Activated B cell treated with CpG ODN at 0.5 μM for 24 hours (primary cell): ENCODE measurements at regions of chr4 and their contacts with region 1.

Region 1: DNA sequence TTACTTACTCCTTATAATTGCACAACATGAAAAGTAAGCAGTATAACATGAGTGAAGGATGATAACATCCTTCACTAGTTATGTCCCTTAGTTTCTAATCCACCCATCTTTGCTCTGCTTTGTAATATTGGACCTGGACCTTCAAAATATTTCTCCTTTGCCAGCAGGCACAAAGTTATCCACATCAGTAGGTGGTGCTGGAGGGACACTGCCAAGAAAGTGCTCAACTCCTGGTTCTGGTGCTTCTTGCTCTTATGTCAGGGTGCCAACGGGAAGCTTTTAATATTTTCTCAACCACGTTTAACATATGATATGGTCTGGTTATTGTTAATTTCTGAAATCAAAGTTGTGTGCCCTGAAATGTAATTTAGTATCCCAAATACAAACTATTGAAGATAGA is 49.1 kb downstream of the TMEM165 start:
- DNase-seq: no peak
- ATAC-seq: no peak
- H3K4me3 Mint-ChIP-seq: no peak overlapping the region
- H3K27ac Mint-ChIP-seq: no peak overlapping the region
- H3K4me1 Mint-ChIP-seq: no peaks in the 10 kb centered on the region
- H3K27me3 Mint-ChIP-seq: no peaks in the 10 kb centered on the region
- CTCF ChIP-seq: no peak

Region 2: DNA sequence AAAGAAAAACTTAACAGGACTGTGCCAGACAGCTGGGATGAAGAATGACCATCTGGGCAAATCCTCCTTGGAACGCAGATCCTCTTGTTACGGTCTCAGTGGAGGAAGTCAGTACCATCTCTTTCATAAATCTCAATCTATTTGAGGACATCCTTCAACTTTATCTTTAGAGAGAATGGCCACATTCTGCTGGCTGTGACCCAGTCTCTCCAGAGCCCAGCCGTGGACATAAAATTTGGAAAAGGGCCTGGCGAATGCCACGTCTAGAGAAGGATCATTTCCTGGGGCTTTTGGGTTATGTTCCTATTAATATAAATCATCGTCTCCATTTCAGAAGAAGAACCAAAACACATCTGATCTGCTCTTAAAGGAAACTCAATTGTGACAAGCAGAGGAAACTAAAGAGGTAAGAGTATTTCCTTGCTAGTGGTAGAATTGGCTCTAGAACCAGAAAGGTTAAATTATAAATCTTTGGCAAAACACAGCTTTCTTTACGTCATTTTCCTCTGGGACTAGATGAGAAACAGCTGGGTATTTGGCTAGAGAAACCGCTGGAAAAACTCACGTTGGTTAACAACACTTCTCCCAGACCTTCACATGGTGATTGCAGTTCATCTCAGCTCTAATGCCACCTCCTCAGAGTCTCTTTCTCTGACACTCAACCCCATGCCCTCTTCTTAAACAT is 1545.1 kb before region 1 on chr4:
- CTCF ChIA-PET with region 1: no interaction called
- POLR2A ChIA-PET with region 1: no interaction called
- intact Hi-C with region 1: no loop called
- DNase-seq: no peak
- ATAC-seq: no peak
- H3K4me3 Mint-ChIP-seq: no peak overlapping the region
- H3K27ac Mint-ChIP-seq: no peak overlapping the region
- H3K4me1 Mint-ChIP-seq: no peaks in the 10 kb centered on the region
- H3K27me3 Mint-ChIP-seq: peaks cover 21% of the 10 kb centered on the region
- CTCF ChIP-seq: no peak

Region 3: DNA sequence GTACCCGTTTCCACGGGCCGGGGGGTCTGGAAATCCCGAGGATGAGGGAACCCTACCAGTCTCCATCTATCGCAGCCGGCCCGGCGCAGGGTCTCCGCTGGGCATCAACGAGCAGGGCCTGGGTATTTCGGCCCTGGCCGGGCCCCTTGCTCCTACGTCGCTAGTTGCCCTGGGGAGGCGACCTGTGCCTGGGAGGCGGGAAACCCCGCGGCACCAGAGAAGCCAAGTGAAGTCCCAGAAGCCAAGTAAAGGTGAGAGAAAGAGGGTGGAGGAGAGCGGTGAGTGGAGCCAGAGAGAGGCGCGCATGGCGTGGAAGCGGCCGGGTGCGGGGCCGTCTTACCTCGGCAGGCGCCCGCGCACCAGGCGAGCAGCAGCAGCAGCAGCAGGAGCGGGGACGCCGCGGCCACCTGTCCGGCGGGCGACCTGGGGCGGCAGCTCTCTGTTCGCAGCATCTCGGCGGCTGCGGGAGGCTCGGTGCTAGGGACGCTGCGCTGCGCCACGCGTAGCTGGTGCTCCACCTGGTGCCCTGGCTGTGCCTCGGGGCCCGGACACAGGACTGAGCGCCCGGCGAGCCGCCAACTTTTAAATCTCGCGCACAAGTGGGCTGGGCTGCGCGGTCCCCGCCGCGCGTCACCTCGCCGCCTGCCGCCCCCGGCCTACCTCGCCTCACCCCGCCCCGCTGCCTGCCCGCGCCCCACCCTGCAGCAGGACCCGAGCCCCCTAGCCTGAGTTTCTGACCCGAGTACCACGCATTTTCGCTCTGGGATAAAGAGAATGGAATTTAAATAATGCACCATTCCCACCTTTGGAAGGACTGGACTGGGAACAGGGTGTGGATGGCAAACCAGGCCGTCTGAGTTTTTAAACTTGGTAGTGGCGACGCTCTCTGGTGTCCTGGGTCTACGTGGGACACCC is 191.2 kb after region 1 on chr4 and contains the start of gene NMU:
- CTCF ChIA-PET with region 1: no interaction called
- POLR2A ChIA-PET with region 1: no interaction called
- intact Hi-C with region 1: loop called (anchors 10 kb)
- DNase-seq: peak; percentile 20
- ATAC-seq: peak; percentile 70
- H3K4me3 Mint-ChIP-seq: peak within 1 kb of the TSS; percentile 73
- H3K27ac Mint-ChIP-seq: no peak within 1 kb of the TSS
- H3K4me1 Mint-ChIP-seq: peaks cover 15% of the 10 kb centered on the region
- H3K27me3 Mint-ChIP-seq: peaks cover 36% of the 10 kb centered on the region
- CTCF ChIP-seq: no peak
- total RNA-seq, gene NMU: not detected in 2 replicates

Region 4: DNA sequence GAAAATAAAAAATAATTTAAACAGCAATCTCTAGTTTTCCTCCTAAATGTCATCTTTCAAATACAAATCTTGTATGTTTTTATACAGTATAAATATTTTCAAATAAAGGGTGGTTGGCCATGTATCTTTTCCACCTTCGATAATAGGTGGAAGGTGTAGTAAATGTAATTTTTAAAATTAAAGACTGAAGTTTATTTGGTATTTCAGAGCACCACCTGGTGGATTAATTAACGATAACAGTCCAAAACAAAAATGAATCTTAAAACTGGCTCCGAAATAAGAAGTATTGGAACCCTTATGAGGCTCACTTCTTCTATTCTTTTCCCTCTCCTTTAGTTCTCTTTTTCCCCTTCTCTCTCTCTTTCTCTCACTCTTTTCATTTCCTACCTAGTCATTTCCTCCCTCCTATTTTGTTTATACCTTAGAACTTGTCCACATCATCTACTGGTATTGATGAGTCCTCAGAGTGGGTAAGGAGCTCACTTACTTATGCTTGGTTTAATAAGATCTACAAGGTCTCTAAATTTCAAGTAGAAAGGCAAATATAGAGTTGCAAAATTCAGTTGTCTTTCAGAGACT is 291.9 kb after region 1 on chr4:
- CTCF ChIA-PET with region 1: no interaction called
- POLR2A ChIA-PET with region 1: no interaction called
- intact Hi-C with region 1: loop called (anchors 1 kb)
- DNase-seq: no peak
- ATAC-seq: no peak
- H3K4me3 Mint-ChIP-seq: no peak overlapping the region
- H3K27ac Mint-ChIP-seq: no peak overlapping the region
- H3K4me1 Mint-ChIP-seq: no peaks in the 10 kb centered on the region
- H3K27me3 Mint-ChIP-seq: peaks cover 32% of the 10 kb centered on the region
- CTCF ChIP-seq: no peak